ENCODE measurements at regions of chr4 and their contacts with region 1.

Region 1: GRCh38 chr4:42568610-42569207 is 88.2 kb downstream of the ATP8A1 start:
- DNase-seq: peak in 7 of 10 donors; percentile 47 to 86 (median 68)

Region 2: GRCh38 chr4:42656944-42657792 is 88.5 kb after region 1 on chr4 and contains the start of gene ATP8A1:
- intact Hi-C with region 1: loop called (anchors 2 kb)
- DNase-seq: peak; percentile 87 to 99 (median 92)

Region 3: GRCh38 chr4:42750091-42750490 is 181.4 kb after region 1 on chr4:
- intact Hi-C with region 1: loop called (anchors 2 kb)
- DNase-seq: peak in 2 of 10 donors; percentile 4 to 38

Region 4: DNA sequence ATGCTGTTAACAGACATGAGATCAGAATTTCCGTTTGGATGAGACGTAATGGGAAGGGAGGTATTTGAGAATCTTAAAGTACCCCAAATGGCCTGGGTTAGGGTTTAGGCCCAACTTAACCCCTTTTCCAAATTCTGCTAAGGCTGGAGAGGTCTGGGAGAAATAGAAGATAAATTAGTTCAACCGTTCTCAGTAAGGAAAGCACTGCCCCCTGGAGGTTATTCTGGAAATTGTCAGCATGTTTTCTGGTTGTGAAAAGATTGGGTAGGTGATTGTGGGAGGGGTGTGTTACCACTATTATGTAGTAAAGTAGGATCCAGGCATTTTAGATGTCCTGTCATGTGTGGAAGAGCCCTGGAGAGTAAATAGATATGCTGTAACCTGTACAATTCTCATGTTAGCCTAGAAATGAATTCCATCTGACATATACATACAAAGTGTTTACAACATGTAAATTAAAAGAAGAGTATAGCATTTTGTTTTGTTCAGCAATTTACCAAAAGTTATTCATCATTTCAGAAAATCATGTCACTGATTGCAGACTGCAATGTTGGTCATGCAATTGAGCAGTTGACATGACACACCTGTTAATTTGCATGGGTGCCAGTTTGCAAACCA is 297.0 kb after region 1 on chr4:
- intact Hi-C with region 1: loop called (anchors 2 kb)
- DNase-seq: peak in 5 of 10 donors; percentile 7 to 41 (median 27)

Region 5: DNA sequence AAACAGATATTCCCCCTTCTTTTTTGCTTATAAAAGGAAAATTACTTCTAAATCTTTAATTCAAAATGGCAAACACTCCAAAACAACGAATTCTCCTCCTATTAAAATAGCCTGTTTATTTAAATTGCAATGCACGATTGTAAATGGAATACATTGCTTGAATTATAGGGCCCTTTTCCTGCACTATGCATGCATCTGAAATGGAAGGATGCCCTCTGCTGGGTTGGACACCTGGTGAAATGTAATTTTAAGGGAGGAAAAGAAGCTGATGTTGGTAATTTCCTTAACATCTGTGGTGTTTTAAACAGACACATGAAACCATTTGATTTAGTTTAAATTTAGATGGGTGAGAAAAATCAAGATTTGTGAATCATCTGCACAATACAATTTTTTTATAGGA is 396.6 kb after region 1 on chr4:
- intact Hi-C with region 1: loop called (anchors 10 kb)
- DNase-seq: peak in 5 of 10 donors; percentile 10 to 79 (median 32)

Measured in posterior cingulate gyrus (tissue), 11 donors.